Aorta (tissue), 5 donors: ENCODE measurements at regions of chr7 and their contacts with region 1.

Region 1: DNA sequence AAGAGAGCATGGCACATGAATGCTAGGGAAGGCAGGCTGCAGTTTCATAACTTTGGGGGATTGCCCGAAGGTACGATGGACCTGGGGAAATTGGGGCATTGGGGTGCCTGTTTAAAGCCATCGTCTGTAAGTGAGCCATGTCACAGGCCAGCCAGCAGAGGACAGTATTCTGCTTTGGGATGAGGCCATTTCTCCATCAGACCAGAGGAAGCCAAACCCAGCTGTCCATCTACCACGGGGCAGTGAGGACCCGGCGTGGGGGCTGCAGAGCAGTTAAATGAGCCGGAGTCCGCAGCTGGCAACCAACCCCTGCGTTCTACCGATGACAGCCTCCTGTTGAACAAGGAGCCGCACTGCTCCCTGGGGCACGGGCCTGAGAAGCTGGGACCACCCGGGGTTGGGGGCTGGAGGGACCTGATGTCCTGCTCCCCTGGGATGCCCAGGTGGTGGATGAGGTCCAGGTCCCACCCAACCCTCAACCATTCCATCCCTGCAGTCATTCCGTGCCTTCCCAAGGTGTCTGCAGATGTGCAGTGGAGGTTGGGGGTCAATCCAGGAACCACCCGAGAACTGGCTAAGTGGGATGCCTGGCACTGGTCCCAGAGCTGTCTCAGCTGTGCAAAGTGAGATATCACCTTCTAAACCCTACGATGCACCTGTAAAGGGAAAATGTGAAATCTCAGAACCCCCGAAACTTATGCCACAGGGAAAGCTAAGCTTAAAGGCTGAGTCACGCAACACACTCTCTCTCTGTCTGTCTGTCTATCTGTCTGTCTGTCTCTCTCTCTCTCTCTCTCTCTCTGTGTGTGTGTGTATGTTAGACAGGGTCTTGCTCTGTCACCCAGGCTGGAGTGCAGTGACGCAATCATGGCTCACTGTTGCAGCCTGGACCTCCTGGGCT is 12.1 kb upstream of the RHBDD2 start:
- DNase-seq: peak; percentile 78
- ATAC-seq: peak; percentile 88
- H3K4me3 ChIP-seq: no peak overlapping the region
- H3K27ac ChIP-seq: no peak overlapping the region
- H3K4me1 ChIP-seq: no peaks in the 10 kb centered on the region
- H3K27me3 ChIP-seq: no peaks in the 10 kb centered on the region

Region 2: DNA sequence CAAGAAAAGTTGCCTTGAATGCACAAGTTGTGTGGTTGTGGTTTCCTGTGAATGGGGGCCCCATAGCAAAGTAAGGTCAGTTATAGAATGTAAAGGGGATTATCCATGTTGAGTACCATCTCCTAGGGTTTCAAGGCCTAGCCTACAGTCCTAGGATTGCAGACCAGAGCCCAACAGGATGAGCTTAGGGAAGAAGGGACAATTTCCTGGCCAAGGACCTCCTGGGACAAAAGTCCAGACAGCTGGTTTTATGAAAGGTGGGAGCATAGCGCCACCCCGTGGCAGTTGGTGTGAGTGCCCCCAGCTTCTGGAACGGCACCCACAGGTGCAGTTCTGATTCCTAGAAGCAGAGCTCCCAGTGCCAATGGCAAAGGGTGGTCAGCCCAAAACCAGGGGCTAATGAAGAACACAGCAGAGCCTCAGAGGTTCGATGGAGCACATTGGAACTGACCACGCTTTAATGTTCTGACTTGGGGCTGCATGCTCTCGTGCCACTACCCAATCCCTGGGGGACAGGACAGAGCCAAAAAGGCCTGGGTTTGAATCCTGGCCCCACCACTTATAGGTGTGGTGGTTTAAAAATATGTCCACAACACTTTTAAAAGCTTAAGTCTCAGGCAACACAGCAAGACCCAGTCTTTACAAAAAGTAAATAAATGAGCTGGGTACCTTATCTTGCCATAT is 153.4 kb after region 1 on chr7:
- intact Hi-C with region 1: loop called (anchors 1 to 2 kb)
- DNase-seq: peak; percentile 77 to 93
- ATAC-seq: peak; percentile 83
- H3K4me3 ChIP-seq: no peak overlapping the region
- H3K27ac ChIP-seq: no peak overlapping the region
- H3K4me1 ChIP-seq: no peaks in the 10 kb centered on the region
- H3K27me3 ChIP-seq: no peaks in the 10 kb centered on the region

Region 3: DNA sequence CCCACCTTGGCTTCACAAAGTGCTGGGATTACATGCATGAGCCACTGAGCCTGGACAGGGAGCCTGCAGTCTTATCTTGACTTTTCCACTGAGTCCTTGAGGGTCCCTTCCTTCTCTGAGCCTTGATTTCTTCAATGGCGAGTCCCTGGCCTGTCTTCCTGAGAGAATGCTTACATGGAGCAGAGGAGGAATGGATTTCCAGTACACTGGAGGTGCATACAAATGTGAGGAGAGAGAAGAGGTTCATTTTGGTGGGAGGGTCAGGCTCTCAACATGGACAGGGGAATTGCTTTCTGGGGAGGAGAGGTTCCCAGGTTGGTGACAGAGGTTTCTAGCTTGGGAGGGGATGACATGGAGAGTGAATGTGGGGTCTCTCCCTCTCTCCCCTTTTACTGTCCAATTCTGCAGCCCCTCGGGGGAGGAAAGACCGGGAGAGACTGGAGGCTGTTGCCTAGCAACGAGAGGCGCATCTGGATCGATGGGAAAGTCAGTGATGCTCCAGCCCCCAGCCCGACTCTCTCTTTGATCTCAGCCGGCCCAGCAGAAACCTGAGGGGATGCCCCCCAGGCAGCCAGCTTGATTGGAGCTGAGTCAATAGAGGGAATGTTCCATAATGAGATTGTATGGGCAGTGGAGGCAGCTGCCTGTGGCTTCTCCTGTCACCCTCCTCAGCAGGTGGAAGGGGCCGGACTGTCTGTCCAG is 349.8 kb after region 1 on chr7:
- intact Hi-C with region 1: no loop called
- DNase-seq: no peak
- ATAC-seq: no peak
- H3K4me3 ChIP-seq: no peak overlapping the region
- H3K27ac ChIP-seq: no peak overlapping the region
- H3K4me1 ChIP-seq: no peaks in the 10 kb centered on the region
- H3K27me3 ChIP-seq: no peaks in the 10 kb centered on the region